Ascending aorta (tissue), 2 donors: ENCODE measurements at regions of chr18 and their contacts with region 1.

Region 1: GRCh38 chr18:3593904-3594661 is 144.1 kb downstream of the TGIF1 start:
- DNase-seq: peak; percentile 80 to 95
- H3K4me3 ChIP-seq: peak overlapping the region; percentile 61 to 63
- H3K27ac ChIP-seq: peak overlapping the region; percentile 98
- H3K4me1 ChIP-seq: peaks cover 26 to 39% of the 10 kb centered on the region in 2 donors
- H3K27me3 ChIP-seq: no peaks in the 10 kb centered on the region
- CTCF ChIP-seq: peak; percentile 81 to 95 (median 95)

Region 2: GRCh38 chr18:3261371-3262246 is 332.5 kb before region 1 on chr18 and contains the start of gene MYL12B:
- intact Hi-C with region 1: loop called (anchors 2 kb)
- DNase-seq: peak; percentile 22 to 87
- H3K4me3 ChIP-seq: peak within 1 kb of the TSS; percentile 94 to 96
- H3K27ac ChIP-seq: peak within 1 kb of the TSS; percentile 96 to 100
- H3K4me1 ChIP-seq: peaks cover 18 to 42% of the 10 kb centered on the region in 2 donors
- H3K27me3 ChIP-seq: no peaks in the 10 kb centered on the region
- CTCF ChIP-seq: peak in 1 of 3 experiments; percentile 27
- total RNA-seq, gene MYL12B: 198 TPM

Region 3: DNA sequence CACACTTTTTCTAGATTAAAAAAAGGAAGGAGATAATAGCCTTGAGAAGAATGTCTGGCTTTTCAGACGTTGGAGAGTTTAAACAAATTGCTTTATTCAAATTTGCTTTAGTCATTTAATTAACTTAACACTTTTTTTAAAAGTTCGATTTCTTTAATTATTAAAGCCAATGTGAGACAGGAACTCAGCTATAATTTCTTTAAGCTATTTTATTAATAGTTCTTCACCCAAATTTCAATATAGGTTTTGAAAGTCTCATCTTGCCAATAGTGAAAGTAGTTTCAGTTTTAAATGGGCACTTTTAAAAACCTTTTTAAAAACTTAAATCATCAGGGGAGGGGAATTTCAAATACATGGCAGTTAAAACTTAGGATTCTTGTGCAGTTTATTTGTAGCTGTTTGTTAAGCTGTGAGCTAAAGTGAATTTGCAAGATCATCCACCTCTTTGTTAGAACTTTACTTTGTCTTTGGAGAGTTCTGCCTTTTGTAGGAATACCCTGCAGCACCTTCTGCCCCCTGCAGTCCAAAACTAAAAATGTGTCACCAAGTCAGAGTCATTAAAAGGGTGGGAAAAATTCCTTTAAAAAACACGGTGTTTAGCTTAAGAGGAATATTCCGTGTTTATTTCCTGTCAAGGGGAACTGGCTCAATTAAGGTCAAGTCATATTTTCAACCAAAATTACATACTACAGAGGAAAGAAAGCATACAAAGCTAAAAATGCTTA is 139.6 kb before region 1 on chr18:
- intact Hi-C with region 1: loop called (anchors 1 kb)
- DNase-seq: no peak
- H3K4me3 ChIP-seq: peak overlapping the region; percentile 79 to 86
- H3K27ac ChIP-seq: peak overlapping the region; percentile 81 to 100
- H3K4me1 ChIP-seq: peaks cover 3 to 25% of the 10 kb centered on the region in 2 donors
- H3K27me3 ChIP-seq: no peaks in the 10 kb centered on the region
- CTCF ChIP-seq: peak; percentile 54 to 65 (median 60)

Region 4: DNA sequence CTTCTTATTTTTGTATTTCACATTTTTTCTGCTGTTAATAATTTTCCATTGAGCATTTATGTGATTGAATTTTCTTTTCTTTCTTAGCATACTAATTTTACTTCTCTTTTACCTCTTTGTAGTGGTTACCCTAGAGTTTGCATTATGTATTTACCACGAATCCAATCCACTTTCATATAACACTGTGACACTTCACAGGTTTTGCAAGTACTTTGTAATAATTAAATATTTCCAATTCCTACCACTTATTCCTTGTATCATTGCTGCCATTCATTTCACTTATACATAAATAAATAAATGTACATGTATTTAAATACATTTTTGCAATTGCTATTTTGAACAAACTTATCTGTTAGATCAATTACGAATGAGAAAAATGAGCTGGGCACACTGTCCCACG is 33.3 kb before region 1 on chr18:
- intact Hi-C with region 1: loop called (anchors 1 kb)
- DNase-seq: no peak
- H3K4me3 ChIP-seq: no peak overlapping the region
- H3K27ac ChIP-seq: peak overlapping the region in 1 of 2 donors; percentile 2
- H3K4me1 ChIP-seq: no peaks in the 10 kb centered on the region
- H3K27me3 ChIP-seq: no peaks in the 10 kb centered on the region
- CTCF ChIP-seq: no peak

Region 5: GRCh38 chr18:3604498-3605408 is 10.7 kb after region 1 on chr18:
- intact Hi-C with region 1: loop called (anchors 1 kb)
- DNase-seq: no peak
- H3K4me3 ChIP-seq: peak overlapping the region; percentile 54 to 69
- H3K27ac ChIP-seq: peak overlapping the region; percentile 94 to 95
- H3K4me1 ChIP-seq: peaks cover 7 to 24% of the 10 kb centered on the region in 2 donors
- H3K27me3 ChIP-seq: no peaks in the 10 kb centered on the region
- CTCF ChIP-seq: no peak

Region 6: DNA sequence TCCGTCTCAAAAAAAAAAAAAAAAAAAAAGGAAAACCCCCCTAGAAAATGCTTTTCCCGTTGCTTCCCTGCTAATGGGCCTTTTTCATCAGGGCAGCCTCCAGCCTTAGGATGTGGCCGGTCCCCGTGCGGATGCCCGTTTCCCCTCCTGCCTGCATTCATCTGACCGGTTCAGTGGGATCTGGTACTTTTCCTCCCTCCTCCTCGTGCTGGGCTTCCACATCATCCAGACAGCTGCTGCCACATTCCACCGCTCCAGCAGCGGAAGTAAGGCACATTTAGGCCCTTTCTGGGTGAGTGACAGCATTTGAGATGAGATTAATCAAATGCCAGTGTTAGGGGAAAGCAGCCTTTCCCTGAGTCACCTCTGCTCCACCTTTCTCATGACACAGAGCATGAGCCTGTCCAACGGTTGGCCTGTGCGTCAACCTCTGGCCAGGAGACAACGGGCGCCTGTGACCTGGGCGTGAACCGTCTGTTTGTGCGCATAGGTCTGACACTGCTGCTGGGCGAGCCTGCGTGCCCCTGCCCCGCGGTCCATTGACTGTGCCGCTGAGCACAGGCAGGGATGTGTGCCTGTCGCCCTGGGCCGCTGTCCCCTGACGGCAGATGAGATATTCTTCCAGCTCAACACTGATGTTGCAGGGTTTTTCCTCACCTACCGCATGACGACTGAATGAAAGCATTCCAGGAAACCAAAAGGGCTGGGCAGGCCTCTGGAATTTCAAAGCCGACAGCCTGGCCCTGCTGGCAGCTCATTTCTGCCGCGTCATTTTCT is 29.9 kb after region 1 on chr18:
- intact Hi-C with region 1: loop called (anchors 1 kb)
- DNase-seq: peak; percentile 69 to 96
- H3K4me3 ChIP-seq: peak overlapping the region; percentile 30 to 38
- H3K27ac ChIP-seq: peak overlapping the region; percentile 89 to 96
- H3K4me1 ChIP-seq: peaks cover 10 to 41% of the 10 kb centered on the region in 2 donors
- H3K27me3 ChIP-seq: no peaks in the 10 kb centered on the region
- CTCF ChIP-seq: no peak

Region 7: GRCh38 chr18:3665780-3666525 is 71.9 kb after region 1 on chr18:
- intact Hi-C with region 1: loop called (anchors 1 kb)
- DNase-seq: peak; percentile 31 to 90
- H3K4me3 ChIP-seq: peak overlapping the region; percentile 32 to 51
- H3K27ac ChIP-seq: peak overlapping the region; percentile 36 to 68
- H3K4me1 ChIP-seq: peaks cover 0 to 5% of the 10 kb centered on the region in 2 donors
- H3K27me3 ChIP-seq: no peaks in the 10 kb centered on the region
- CTCF ChIP-seq: peak; percentile 88 to 93 (median 92)